Activated CD8-positive, alpha-beta T cell treated with anti-CD3 and anti-CD28 coated beads, Interleukin-2, amount 10 ng/mL, durations not matched to agents 7 days and 5 days (primary cell): ENCODE measurements at regions of chr4 and their contacts with region 1.

Region 1: GRCh38 chr4:185183619-185184281 is 20.1 kb downstream of the CFAP97 start:
- DNase-seq: peak; percentile 86
- ATAC-seq: peak; percentile 86
- H3K4me3 Mint-ChIP-seq: no peak overlapping the region
- H3K27ac Mint-ChIP-seq: no peak overlapping the region
- H3K4me1 Mint-ChIP-seq: peaks cover 9% of the 10 kb centered on the region
- H3K27me3 Mint-ChIP-seq: no peaks in the 10 kb centered on the region

Region 2: GRCh38 chr4:185005216-185005819 is 178.4 kb before region 1 on chr4:
- CTCF ChIA-PET with region 1: interaction called, 14 read pairs
- POLR2A ChIA-PET with region 1: no interaction called
- DNase-seq: peak; percentile 86
- ATAC-seq: peak; percentile 97
- H3K4me3 Mint-ChIP-seq: peak overlapping the region; percentile 30
- H3K27ac Mint-ChIP-seq: no peak overlapping the region
- H3K4me1 Mint-ChIP-seq: peaks cover 6% of the 10 kb centered on the region
- H3K27me3 Mint-ChIP-seq: peaks cover 32% of the 10 kb centered on the region

Region 3: GRCh38 chr4:185122681-185123345 is 60.9 kb before region 1 on chr4:
- CTCF ChIA-PET with region 1: interaction called, 10 read pairs
- POLR2A ChIA-PET with region 1: no interaction called
- DNase-seq: no peak
- ATAC-seq: no peak
- H3K4me3 Mint-ChIP-seq: no peak overlapping the region
- H3K27ac Mint-ChIP-seq: no peak overlapping the region
- H3K4me1 Mint-ChIP-seq: peaks cover 10% of the 10 kb centered on the region
- H3K27me3 Mint-ChIP-seq: peaks cover 51% of the 10 kb centered on the region

Region 4: GRCh38 chr4:185142912-185143595 is 40.7 kb before region 1 on chr4 and contains the start of gene SLC25A4:
- CTCF ChIA-PET with region 1: interaction called, 10 read pairs
- POLR2A ChIA-PET with region 1: no interaction called
- DNase-seq: peak; percentile 79
- ATAC-seq: peak; percentile 96
- H3K4me3 Mint-ChIP-seq: peak within 1 kb of the TSS; percentile 83
- H3K27ac Mint-ChIP-seq: no peak within 1 kb of the TSS
- H3K4me1 Mint-ChIP-seq: peaks cover 10% of the 10 kb centered on the region
- H3K27me3 Mint-ChIP-seq: peaks cover 34% of the 10 kb centered on the region
- total RNA-seq, gene SLC25A4: 3.3 to 4.8 TPM

Region 5: GRCh38 chr4:185171373-185172071 is 12.2 kb before region 1 on chr4:
- CTCF ChIA-PET with region 1: interaction called, 28 read pairs
- POLR2A ChIA-PET with region 1: no interaction called
- DNase-seq: no peak
- ATAC-seq: no peak
- H3K4me3 Mint-ChIP-seq: no peak overlapping the region
- H3K27ac Mint-ChIP-seq: no peak overlapping the region
- H3K4me1 Mint-ChIP-seq: no peaks in the 10 kb centered on the region
- H3K27me3 Mint-ChIP-seq: no peaks in the 10 kb centered on the region

Region 6: GRCh38 chr4:185201983-185202962 is 18.5 kb after region 1 on chr4:
- CTCF ChIA-PET with region 1: interaction called, 19 read pairs
- POLR2A ChIA-PET with region 1: interaction called, 3 read pairs
- DNase-seq: peak; percentile 29
- ATAC-seq: no peak
- H3K4me3 Mint-ChIP-seq: peak overlapping the region; percentile 91
- H3K27ac Mint-ChIP-seq: peak overlapping the region; percentile 96
- H3K4me1 Mint-ChIP-seq: peaks cover 31% of the 10 kb centered on the region
- H3K27me3 Mint-ChIP-seq: no peaks in the 10 kb centered on the region

Region 7: DNA sequence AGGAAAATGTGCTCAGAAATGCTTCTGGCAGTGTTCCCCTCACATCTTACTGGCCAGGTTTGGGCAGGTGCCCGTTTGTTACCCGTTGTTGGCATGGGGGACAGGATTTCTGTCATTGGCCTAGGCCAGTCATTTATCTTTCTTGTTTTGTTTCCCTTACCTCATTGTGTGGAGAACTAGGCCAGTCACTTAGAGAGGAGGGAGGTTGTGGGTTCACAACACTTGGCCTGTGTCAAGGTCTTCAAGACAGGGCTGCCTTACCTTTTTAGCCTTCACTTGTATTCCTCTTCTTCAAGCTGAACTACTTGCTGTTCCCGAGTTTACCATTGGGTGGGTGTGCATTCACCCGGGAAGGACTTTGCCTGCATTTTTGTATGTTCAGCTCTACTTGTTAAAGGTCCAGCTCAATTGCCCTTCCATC is 43.4 kb after region 1 on chr4:
- CTCF ChIA-PET with region 1: no interaction called
- POLR2A ChIA-PET with region 1: no interaction called
- DNase-seq: no peak
- ATAC-seq: no peak
- H3K4me3 Mint-ChIP-seq: no peak overlapping the region
- H3K27ac Mint-ChIP-seq: no peak overlapping the region
- H3K4me1 Mint-ChIP-seq: no peaks in the 10 kb centered on the region
- H3K27me3 Mint-ChIP-seq: no peaks in the 10 kb centered on the region

Region 8: DNA sequence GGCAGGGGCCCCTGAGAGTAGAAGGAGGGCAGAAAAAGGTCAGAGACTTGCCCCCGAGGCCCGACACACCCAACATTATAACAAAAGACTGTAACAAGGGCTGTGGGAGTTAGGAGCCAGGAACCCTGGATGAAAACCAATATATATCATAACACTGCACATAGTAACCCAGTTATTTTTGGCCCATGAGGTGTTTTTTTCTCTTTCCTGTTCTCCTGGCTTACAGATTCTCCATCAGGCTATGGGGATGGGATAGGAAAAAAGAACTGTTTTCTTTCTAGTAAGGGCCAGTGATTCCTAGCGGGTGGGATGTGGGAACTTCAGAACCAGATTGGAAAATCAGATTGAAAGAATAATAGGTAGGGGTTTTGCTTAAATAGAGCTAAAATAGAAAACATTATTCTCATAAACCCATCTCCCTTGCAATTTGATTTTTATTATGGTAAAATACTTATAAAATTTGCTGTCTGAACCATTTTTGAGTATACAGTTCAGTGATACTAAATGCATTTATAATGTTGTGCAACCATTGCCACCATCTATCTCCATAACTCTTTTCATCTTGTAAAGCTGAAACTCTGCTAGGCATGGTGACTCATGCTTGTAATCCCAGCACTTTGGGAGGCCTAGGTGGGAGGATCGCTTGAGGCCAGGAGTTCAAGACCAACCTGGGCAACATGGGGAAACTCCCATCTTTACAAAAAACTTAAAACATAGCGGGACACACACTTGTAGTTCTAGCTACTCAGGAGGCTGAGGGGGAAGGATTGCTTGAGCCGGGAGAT is 59.2 kb after region 1 on chr4:
- CTCF ChIA-PET with region 1: no interaction called
- POLR2A ChIA-PET with region 1: no interaction called
- DNase-seq: no peak
- ATAC-seq: no peak
- H3K4me3 Mint-ChIP-seq: no peak overlapping the region
- H3K27ac Mint-ChIP-seq: no peak overlapping the region
- H3K4me1 Mint-ChIP-seq: no peaks in the 10 kb centered on the region
- H3K27me3 Mint-ChIP-seq: no peaks in the 10 kb centered on the region